AG04450 (cell line): ENCODE measurements at regions of chr10 and their contacts with region 1.

Region 1: GRCh38 chr10:2927958-2928840 is 139.1 kb upstream of the PFKP start:
- DNase-seq: peak; percentile 26
- H3K4me3 ChIP-seq: peak overlapping the region; percentile 23
- H3K27ac ChIP-seq: no peak overlapping the region
- H3K27me3 ChIP-seq: peaks cover 6% of the 10 kb centered on the region
- CTCF ChIP-seq: peak; percentile 87

Region 2: GRCh38 chr10:2938869-2939268 is 10.7 kb after region 1 on chr10:
- CTCF ChIA-PET with region 1: interaction called, 26 read pairs
- POLR2A ChIA-PET with region 1: no interaction called
- DNase-seq: no peak
- H3K4me3 ChIP-seq: no peak overlapping the region
- H3K27ac ChIP-seq: no peak overlapping the region
- H3K27me3 ChIP-seq: peaks cover 14% of the 10 kb centered on the region
- CTCF ChIP-seq: peak; percentile 37

Region 3: GRCh38 chr10:2968401-2969058 is 40.3 kb after region 1 on chr10:
- CTCF ChIA-PET with region 1: interaction called, 13 read pairs
- POLR2A ChIA-PET with region 1: no interaction called
- DNase-seq: no peak
- H3K4me3 ChIP-seq: no peak overlapping the region
- H3K27ac ChIP-seq: no peak overlapping the region
- H3K27me3 ChIP-seq: no peaks in the 10 kb centered on the region
- CTCF ChIP-seq: no peak

Region 4: DNA sequence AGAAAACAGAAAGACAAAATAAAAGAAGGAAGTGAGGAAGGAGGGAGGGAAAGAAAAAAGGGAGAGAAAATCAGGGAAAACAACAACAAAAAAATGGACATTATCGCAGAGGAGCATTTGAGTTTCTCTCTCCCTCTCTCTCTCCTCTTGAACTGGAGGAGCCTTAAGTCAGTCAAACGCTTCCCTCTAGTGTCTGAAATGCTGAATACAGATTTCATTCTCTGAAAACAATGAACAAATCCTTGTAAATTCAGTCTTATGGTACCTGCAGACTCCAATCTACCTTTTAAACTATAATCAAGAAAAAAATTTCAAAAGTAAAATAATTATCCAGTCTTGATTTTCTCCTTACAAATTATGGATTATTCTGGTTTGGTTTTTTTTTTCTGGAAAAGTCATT is 49.9 kb after region 1 on chr10:
- CTCF ChIA-PET with region 1: interaction called, 28 read pairs
- POLR2A ChIA-PET with region 1: no interaction called
- DNase-seq: no peak
- H3K4me3 ChIP-seq: no peak overlapping the region
- H3K27ac ChIP-seq: no peak overlapping the region
- H3K27me3 ChIP-seq: no peaks in the 10 kb centered on the region
- CTCF ChIP-seq: peak; percentile 76